ENCODE measurements at regions of chr7 and their contacts with region 1.

Region 1: GRCh38 chr7:5665094-5666025 is 116.1 kb downstream of the RNF216 start:
- DNase-seq: peak; percentile 80
- H3K4me3 ChIP-seq: no peak overlapping the region; a peak in 1 of 4 replicates
- H3K27ac ChIP-seq: 0 out of 4 replicates have a peak overlapping the region, but pooled peaks have one; percentile 9 to 11
- H3K4me1 ChIP-seq: peaks cover 6 to 35% of the 10 kb centered on the region in 2 experiments; a peak in 2 of 4 replicates
- H3K27me3 ChIP-seq: no peaks in the 10 kb centered on the region
- CTCF ChIP-seq: peak; percentile 99
- EP300 ChIP-seq: no peak
- RAD21 ChIP-seq: peak; percentile 100

Region 2: GRCh38 chr7:5596046-5596895 is 69.1 kb before region 1 on chr7:
- CTCF ChIA-PET with region 1: interaction called, 13 read pairs
- POLR2A ChIA-PET with region 1: interaction called, 4 read pairs
- DNase-seq: peak; percentile 90
- H3K4me3 ChIP-seq: peak overlapping the region; percentile 63 to 99
- H3K27ac ChIP-seq: peak overlapping the region; percentile 88 to 92
- H3K4me1 ChIP-seq: peaks cover 34 to 42% of the 10 kb centered on the region in 2 experiments; a peak in 3 of 4 replicates
- H3K27me3 ChIP-seq: no peaks in the 10 kb centered on the region
- CTCF ChIP-seq: no peak
- EP300 ChIP-seq: peak; percentile 5 to 77; a peak in 2 of 4 replicates
- RAD21 ChIP-seq: peak; percentile 8; the same call in 1 of the 2 replicates

Region 3: DNA sequence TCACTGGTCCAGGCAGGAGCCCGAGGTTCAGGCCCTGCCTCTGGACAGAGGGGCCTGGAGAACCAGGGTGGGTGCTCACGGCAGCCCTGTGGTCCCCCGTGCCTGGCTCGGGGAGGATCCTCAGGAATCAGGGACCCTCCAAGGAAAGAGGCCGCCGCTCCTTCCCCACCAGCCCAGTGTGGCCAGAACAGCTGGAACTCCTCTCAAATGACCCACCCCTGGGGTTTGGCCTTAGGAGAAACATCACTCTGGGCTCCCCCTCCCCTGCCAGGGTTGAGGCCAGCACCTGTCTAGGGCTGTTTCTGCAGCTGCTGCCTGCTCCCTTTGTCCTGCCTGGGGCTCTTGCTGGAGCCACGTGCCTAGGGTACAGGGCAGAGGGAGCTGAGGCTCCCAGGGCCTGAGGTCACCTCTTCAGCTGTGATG is 44.9 kb before region 1 on chr7:
- CTCF ChIA-PET with region 1: interaction called, 33 read pairs
- POLR2A ChIA-PET with region 1: interaction called, 4 read pairs
- DNase-seq: peak; percentile 61
- H3K4me3 ChIP-seq: no peak overlapping the region
- H3K27ac ChIP-seq: peak overlapping the region in 1 of 2 experiments; percentile 23; a peak in 2 of 4 replicates
- H3K4me1 ChIP-seq: peaks cover 2 to 4% of the 10 kb centered on the region in 2 experiments; a peak in 3 of 4 replicates
- H3K27me3 ChIP-seq: no peaks in the 10 kb centered on the region
- CTCF ChIP-seq: no peak
- EP300 ChIP-seq: no peak
- RAD21 ChIP-seq: no peak

Region 4: GRCh38 chr7:5646852-5647251 is 18.5 kb before region 1 on chr7:
- CTCF ChIA-PET with region 1: interaction called, 54 read pairs
- POLR2A ChIA-PET with region 1: interaction called, 3 read pairs
- DNase-seq: no peak
- H3K4me3 ChIP-seq: no peak overlapping the region
- H3K27ac ChIP-seq: 0 out of 4 replicates have a peak overlapping the region, but pooled peaks of 1 of the 2 experiments have one; percentile 6
- H3K4me1 ChIP-seq: peaks cover 16 to 18% of the 10 kb centered on the region in 2 experiments; a peak in 3 of 4 replicates
- H3K27me3 ChIP-seq: no peaks in the 10 kb centered on the region
- CTCF ChIP-seq: no peak
- EP300 ChIP-seq: no peak
- RAD21 ChIP-seq: no peak

Region 5: GRCh38 chr7:5689118-5689517 is 23.8 kb after region 1 on chr7:
- CTCF ChIA-PET with region 1: interaction called, 63 read pairs
- POLR2A ChIA-PET with region 1: no interaction called
- DNase-seq: no peak
- H3K4me3 ChIP-seq: no peak overlapping the region
- H3K27ac ChIP-seq: peak overlapping the region in 1 of 2 experiments; percentile 99; a peak in 2 of 4 replicates
- H3K4me1 ChIP-seq: peaks cover 43 to 54% of the 10 kb centered on the region in 2 experiments
- H3K27me3 ChIP-seq: no peaks in the 10 kb centered on the region
- CTCF ChIP-seq: no peak
- EP300 ChIP-seq: no peak
- RAD21 ChIP-seq: no peak

Region 6: DNA sequence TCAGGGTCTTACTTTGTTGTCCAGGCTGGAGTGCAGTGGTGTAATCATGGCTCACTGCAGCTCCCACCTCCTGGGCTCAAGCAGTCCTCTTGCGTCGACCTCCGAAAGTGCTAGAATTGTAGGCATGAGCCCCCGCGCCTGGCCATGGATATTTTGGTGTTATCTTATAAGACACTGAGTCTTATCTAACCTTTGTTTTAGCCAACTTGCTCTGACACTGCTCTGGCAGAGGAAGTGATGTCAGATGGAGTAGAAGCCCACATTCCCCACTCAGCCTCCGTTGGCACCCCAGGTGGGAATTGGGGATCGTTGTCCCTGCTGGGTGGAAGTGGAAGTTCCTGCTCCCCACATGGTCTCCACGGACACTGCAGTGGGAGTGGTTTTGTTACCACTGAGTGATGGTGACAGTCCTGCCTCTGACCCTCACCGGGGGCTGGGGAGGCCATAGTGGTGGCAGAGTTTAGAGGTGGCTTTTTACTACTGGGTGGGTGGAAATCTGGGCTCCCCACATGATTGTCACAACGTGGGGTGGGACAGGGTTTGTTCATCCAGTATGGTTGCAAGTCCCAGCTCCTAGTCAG is 464.7 kb after region 1 on chr7:
- CTCF ChIA-PET with region 1: no interaction called
- POLR2A ChIA-PET with region 1: no interaction called
- DNase-seq: no peak
- H3K4me3 ChIP-seq: no peak overlapping the region
- H3K27ac ChIP-seq: no peak overlapping the region
- H3K4me1 ChIP-seq: no peaks in the 10 kb centered on the region
- H3K27me3 ChIP-seq: no peaks in the 10 kb centered on the region
- CTCF ChIP-seq: no peak
- EP300 ChIP-seq: no peak
- RAD21 ChIP-seq: no peak

Measured in SK-N-SH (cell line).